ENCODE measurements at regions of chr2 and their contacts with region 1.

Region 1: GRCh38 chr2:160970052-160970965 is 189.9 kb upstream of the TANK start:
- DNase-seq: peak; percentile 59
- H3K4me3 ChIP-seq: no peak overlapping the region
- H3K27ac ChIP-seq: no peak overlapping the region
- H3K27me3 ChIP-seq: no peaks in the 10 kb centered on the region
- CTCF ChIP-seq: peak; percentile 86

Region 2: GRCh38 chr2:160269803-160270570 is 700.3 kb before region 1 on chr2:
- CTCF ChIA-PET with region 1: interaction called, 13 read pairs
- POLR2A ChIA-PET with region 1: no interaction called
- DNase-seq: peak; percentile 80
- H3K4me3 ChIP-seq: peak overlapping the region; percentile 52
- H3K27ac ChIP-seq: peak overlapping the region; percentile 96
- H3K27me3 ChIP-seq: no peaks in the 10 kb centered on the region
- CTCF ChIP-seq: peak; percentile 75

Region 3: DNA sequence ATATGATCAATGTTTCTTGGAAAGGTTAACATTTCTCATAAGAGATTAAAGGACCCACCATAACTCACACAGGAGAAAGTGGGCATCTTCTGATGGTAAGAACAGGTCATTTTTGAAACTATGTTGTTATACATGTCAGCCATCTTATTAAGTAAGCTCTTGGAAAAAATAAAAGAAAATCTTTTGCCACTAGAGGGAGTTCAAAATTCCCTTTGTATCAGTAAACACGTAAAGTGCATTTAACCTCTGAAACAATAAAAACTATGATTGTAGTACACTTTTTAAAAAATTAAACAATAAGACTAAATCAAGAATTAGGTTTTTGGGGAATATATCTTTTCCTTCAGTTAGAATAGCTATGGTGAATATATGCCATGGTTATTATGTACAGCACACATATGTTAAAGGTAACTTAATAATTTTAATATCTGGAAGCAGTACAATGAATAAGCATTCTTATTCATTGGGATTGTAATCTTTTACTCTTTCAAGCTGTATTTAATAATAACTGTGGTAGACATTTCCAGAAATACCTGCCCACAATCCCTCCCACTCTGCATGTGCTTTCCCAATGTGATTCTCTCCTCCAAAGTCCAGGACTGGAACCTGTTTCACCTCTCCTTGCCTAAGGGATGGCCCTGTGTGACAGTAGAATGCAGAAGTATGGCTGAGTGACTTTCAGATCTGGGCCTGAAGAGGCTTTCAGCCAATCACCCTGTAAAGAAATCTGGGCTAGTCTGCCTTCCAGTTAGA is 540.9 kb before region 1 on chr2:
- CTCF ChIA-PET with region 1: interaction called, 25 read pairs
- POLR2A ChIA-PET with region 1: no interaction called
- DNase-seq: no peak
- H3K4me3 ChIP-seq: no peak overlapping the region
- H3K27ac ChIP-seq: no peak overlapping the region
- H3K27me3 ChIP-seq: no peaks in the 10 kb centered on the region
- CTCF ChIP-seq: peak; percentile 61

Region 4: DNA sequence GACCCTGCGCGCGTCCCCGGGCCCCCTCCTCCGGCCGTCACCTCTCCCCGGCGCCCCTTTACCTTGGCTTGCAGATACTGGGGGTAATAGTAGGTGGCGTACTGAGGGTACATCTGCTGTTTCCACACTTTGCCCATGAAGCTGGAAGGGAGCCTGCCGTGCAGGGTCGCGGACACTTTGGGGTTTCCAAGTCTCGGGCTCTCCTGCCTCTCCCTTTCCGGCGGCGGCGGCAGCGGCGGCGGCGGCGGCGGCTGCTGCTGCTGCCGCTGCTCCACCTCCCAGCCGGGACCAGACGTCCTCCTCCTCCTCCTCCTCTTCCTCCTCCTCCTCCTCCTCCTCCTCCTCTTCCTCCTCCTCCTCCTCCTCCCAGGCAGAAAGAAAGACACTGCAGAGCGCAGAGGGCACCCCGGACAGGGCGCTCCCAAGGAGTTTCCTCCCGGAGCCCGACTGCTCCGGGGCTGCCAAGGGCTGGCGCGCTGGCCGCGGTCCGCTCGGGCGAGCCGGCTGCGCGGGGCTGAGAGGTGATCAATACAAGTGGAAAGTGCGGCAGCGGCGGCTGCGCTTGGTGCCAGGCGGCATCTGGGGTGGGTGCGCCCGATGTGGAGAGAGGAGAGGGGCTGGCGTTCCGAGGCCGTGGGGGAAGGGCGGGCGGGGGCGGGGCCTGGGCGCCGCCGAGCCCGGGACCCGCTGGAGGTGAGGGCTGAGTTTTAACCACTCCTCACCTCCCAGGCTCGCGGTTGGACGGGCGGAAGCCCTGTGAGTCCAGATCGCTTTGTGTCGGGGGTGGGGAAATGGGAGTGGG is 476.9 kb before region 1 on chr2 and contains the start of gene RBMS1:
- CTCF ChIA-PET with region 1: interaction called, 12 read pairs
- POLR2A ChIA-PET with region 1: no interaction called
- DNase-seq: no peak
- H3K4me3 ChIP-seq: peak within 1 kb of the TSS; percentile 83
- H3K27ac ChIP-seq: peak within 1 kb of the TSS; percentile 82
- H3K27me3 ChIP-seq: no peaks in the 10 kb centered on the region
- CTCF ChIP-seq: no peak
- polyA plus RNA-seq, gene RBMS1: 89.4 and 107 TPM in 2 replicates

Region 5: DNA sequence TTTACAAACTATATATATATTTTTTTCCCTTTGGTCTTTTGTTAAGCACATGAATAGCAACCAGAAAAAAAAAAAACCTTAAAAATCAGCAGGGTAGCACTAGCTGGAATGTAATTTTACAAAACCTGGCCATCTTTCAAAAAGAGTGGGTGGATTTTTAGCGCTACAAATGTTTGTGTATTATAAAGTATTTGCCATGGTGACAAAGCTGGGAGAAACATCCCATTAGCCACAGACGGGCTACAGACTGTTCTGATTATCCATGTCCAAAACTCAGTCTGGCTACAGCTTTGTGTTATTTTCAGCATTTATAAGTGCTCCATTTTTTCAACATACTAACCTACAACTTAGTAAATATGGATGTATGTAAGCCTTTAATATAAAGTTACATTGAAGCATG is 59.6 kb before region 1 on chr2:
- CTCF ChIA-PET with region 1: interaction called, 11 read pairs
- POLR2A ChIA-PET with region 1: no interaction called
- DNase-seq: peak; percentile 23
- H3K4me3 ChIP-seq: no peak overlapping the region
- H3K27ac ChIP-seq: no peak overlapping the region
- H3K27me3 ChIP-seq: no peaks in the 10 kb centered on the region
- CTCF ChIP-seq: no peak